SK-N-SH (cell line): ENCODE measurements at regions of chr1 and their contacts with region 1.

Region 1: DNA sequence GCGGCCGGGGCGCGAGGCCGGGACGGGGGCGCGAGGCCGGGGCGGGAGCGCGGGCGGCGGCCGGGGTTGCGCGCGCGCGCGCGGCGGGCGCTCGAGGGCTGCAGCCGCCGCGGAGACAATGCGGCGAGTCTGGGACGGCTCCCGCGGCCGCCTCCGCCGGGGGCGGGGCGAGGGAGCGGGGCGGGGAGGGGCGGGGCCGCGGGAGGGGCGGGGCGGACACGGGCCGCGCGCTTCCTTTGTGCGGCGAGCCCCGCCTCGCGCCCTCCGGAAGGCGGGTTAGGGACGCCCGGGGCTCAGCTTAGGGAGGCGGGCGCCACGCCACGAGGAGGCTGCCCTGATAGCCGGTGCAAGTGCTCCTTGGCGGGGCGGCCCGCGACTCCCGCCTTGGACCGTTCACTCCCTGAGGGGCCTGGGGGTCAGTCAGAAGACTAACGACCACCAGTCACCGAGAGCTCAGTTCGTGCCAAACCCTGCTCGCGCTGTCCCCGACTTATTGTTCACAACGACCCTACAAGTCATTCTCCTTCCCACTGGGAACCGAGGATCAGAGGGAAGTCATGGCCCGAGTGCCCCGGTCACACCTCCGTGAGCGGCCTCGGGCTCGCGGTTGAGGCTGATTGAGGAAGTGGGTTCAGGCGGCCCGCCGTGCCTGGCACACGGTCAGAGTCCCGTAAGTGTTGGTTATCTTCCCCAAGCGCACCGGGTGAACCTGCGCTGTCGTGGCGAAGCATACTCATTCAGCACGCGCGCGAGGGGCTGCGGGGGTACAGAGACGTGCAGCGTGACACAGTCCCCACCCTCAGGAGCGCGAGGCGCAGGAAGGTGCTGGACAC is 29.1 kb upstream of the A3GALT2 start:
- DNase-seq: peak; percentile 98
- H3K4me3 ChIP-seq: peak overlapping the region; percentile 62 to 78
- H3K27ac ChIP-seq: peak overlapping the region; percentile 75 to 94
- H3K4me1 ChIP-seq: peaks cover 21 to 35% of the 10 kb centered on the region in 2 experiments
- H3K27me3 ChIP-seq: no peaks in the 10 kb centered on the region
- CTCF ChIP-seq: no peak
- EP300 ChIP-seq: no peak
- RAD21 ChIP-seq: no peak

Region 2: GRCh38 chr1:33361532-33362235 is 11.7 kb after region 1 on chr1:
- CTCF ChIA-PET with region 1: interaction called, 27 read pairs
- POLR2A ChIA-PET with region 1: interaction called, 10 read pairs
- DNase-seq: no peak
- H3K4me3 ChIP-seq: no peak overlapping the region
- H3K27ac ChIP-seq: no peak overlapping the region
- H3K4me1 ChIP-seq: peaks cover 0 to 44% of the 10 kb centered on the region in 2 experiments; a peak in 3 of 4 replicates
- H3K27me3 ChIP-seq: no peaks in the 10 kb centered on the region
- CTCF ChIP-seq: no peak
- EP300 ChIP-seq: no peak
- RAD21 ChIP-seq: no peak

Region 3: GRCh38 chr1:33367485-33368405 is 17.8 kb after region 1 on chr1:
- CTCF ChIA-PET with region 1: interaction called, 27 read pairs
- POLR2A ChIA-PET with region 1: interaction called, 10 read pairs
- DNase-seq: peak; percentile 93
- H3K4me3 ChIP-seq: no peak overlapping the region
- H3K27ac ChIP-seq: peak overlapping the region in 1 of 2 experiments; percentile 25; a peak in 1 of 4 replicates
- H3K4me1 ChIP-seq: peaks cover 0 to 57% of the 10 kb centered on the region in 2 experiments
- H3K27me3 ChIP-seq: no peaks in the 10 kb centered on the region
- CTCF ChIP-seq: peak; percentile 94
- EP300 ChIP-seq: no peak
- RAD21 ChIP-seq: peak; percentile 96